GM10248 (cell line): ENCODE measurements at regions of chr14 and their contacts with region 1.

Region 1: GRCh38 chr14:47929334-47929733 is 253.9 kb upstream of the MDGA2 start:
- DNase-seq: no peak
- CTCF ChIP-seq: no peak

Region 2: DNA sequence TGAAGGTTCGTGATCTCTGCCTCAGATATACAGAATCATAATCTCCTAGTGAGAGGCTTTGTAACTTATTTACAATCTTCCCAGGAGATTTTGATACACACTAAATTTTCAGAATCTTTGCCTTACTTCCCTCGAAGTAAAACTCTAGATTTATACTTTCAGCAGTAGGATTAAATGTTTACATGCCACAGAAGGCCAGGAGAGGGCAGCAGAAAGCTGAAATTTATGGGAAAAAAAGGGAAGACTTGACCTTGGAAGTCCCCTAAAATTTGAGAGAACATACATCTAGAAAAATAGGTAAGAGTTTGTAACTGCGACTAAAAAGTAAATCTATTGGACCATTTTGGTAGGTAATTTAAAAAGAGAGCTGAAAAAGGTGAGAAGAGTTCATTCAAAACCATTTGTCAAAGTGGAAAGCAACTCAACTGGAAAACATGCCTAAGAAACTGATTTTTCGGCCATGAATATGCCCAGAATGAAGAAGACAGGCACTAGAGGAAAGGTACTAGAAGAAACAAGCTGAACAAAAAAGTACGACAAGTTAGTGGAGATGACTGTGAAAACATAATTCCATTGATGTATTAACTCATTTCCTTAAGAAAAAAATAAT is 11.9 kb before region 1 on chr14:
- CTCF ChIA-PET with region 1: interaction called, 10 read pairs
- POLR2A ChIA-PET with region 1: no interaction called
- DNase-seq: no peak
- CTCF ChIP-seq: peak; percentile 61